ENCODE measurements at regions of chr6 and their contacts with region 1.

Region 1: GRCh38 chr6:119078376-119079282 is at the start of gene FAM184A:
- DNase-seq: peak; percentile 94
- H3K4me3 Mint-ChIP-seq: peak within 1 kb of the TSS; percentile 93
- H3K27ac Mint-ChIP-seq: peak within 1 kb of the TSS; percentile 93
- H3K4me1 Mint-ChIP-seq: peaks cover 37% of the 10 kb centered on the region
- H3K27me3 Mint-ChIP-seq: peaks cover 6% of the 10 kb centered on the region
- total RNA-seq, gene FAM184A: 7.5 and 9.0 TPM in 2 replicates

Region 2: GRCh38 chr6:118651282-118652050 is 427.2 kb before region 1 on chr6 and contains the start of gene CEP85L:
- intact Hi-C with region 1: loop called (anchors 10 kb)
- DNase-seq: peak; percentile 96
- H3K4me3 Mint-ChIP-seq: peak within 1 kb of the TSS; percentile 90
- H3K27ac Mint-ChIP-seq: peak within 1 kb of the TSS; percentile 93
- H3K4me1 Mint-ChIP-seq: peaks cover 29% of the 10 kb centered on the region
- H3K27me3 Mint-ChIP-seq: no peaks in the 10 kb centered on the region
- total RNA-seq, gene CEP85L: 42.3 and 42.7 TPM in 2 replicates

Region 3: DNA sequence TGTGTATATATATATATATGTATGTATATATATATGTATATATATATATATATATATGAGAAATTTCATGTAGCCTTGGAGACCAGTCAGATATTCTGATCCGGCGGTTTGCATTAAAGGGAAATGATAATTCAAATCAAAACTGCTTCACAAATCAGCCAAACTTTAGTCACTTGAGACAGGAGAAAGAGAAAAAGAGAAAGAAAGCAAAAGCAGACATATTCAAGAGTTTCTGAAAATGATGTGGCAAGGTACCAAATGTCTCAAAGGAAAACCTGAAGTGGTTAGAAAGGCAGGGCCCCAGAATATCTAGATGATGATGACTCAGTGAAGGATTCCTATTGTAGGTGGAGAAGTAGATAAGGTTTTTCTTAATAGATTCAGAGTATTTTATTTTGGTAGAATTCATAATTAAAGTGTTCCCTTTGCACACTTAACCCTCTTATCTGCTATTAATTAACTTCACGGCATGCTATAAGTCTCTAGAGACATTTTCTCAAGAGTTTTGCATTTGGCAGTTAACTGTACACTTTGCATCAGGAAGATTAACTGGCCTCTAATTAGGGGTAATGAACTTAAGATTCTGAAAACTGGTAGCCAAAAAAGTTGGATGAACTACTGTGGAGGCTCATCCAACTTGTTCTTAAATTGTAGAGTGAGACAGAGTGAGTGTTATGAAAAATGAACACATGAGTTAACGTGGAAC is 234.8 kb before region 1 on chr6:
- intact Hi-C with region 1: loop called (anchors 5 kb)
- DNase-seq: peak; percentile 73
- H3K4me3 Mint-ChIP-seq: peak overlapping the region; percentile 59
- H3K27ac Mint-ChIP-seq: peak overlapping the region; percentile 72
- H3K4me1 Mint-ChIP-seq: peaks cover 22% of the 10 kb centered on the region
- H3K27me3 Mint-ChIP-seq: no peaks in the 10 kb centered on the region

Region 4: DNA sequence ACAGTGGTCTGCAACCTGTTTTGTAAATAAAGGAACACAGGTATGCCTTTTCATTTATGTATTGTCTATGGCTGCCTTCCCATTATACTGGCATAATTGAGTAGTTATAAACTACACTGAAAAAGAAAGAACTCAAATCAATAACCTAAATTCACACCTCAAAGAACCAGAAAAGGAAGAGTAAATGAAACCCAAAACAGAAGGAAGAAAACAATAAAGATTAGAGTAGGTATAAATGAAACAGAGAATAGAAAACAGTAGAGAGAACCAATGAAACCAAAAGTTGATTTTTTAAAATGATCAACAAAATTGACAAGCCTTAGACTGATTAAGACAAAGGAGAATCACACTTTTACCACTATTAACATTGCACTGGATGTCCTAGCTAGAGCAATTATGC is 34.8 kb before region 1 on chr6:
- intact Hi-C with region 1: loop called (anchors 1 kb)
- DNase-seq: no peak
- H3K4me3 Mint-ChIP-seq: no peak overlapping the region
- H3K27ac Mint-ChIP-seq: peak overlapping the region; percentile 1
- H3K4me1 Mint-ChIP-seq: peaks cover 10% of the 10 kb centered on the region
- H3K27me3 Mint-ChIP-seq: no peaks in the 10 kb centered on the region

Region 5: DNA sequence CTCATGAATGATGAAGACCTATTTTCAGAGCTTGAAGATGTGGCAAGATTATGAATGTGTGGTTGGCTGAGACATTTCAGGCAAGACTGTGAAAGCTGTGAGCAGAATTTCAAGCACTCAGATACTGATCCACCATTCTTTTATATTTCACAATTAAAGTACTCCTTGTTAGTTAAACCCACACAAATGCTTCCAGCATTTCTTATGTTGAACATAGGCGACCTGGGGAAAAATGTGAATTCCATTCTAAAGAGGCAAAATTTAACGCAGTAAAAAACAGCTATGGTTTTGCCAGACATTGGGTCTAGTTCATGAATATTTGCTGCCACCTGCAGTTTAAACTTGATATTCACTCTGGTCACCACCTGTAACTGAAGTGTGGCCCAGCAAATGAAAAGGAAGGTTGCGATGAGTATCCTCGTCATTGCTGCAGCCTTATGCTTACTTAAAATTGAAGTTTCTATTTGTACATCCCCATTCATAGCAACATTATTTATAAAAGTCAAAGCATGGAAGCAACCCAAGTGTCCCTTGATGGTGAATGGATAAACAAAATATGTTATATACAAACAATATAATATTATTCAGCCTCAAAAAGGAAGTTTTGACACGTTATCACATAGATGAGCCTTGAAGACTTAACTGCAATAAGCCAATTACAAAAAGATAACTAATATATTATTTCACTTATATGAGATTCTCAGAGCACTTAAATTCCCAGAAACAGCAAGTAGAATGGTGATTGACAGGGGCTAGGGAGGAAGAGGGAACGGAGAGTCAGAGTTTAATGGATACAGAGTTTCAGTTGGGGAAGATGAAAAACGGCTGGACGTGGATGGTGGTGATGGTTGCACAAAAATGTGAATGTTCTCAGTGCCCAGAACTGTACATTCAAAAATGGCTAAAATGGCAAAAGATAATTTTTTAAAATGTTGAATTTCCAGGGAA is 32.2 kb after region 1 on chr6:
- intact Hi-C with region 1: loop called (anchors 5 kb)
- DNase-seq: peak; percentile 89
- H3K4me3 Mint-ChIP-seq: no peak overlapping the region
- H3K27ac Mint-ChIP-seq: no peak overlapping the region
- H3K4me1 Mint-ChIP-seq: peaks cover 12% of the 10 kb centered on the region
- H3K27me3 Mint-ChIP-seq: no peaks in the 10 kb centered on the region